ENCODE measurements at regions of chr19 and their contacts with region 1.

Region 1: GRCh38 chr19:50431343-50432220 is 1.1 kb upstream of the MYBPC2 start:
- DNase-seq: peak; percentile 91
- ATAC-seq: peak; percentile 64
- H3K4me3 Mint-ChIP-seq: peak overlapping the region; percentile 89
- H3K27ac Mint-ChIP-seq: peak overlapping the region; percentile 95
- H3K4me1 Mint-ChIP-seq: peaks cover 95% of the 10 kb centered on the region
- H3K27me3 Mint-ChIP-seq: no peaks in the 10 kb centered on the region
- CTCF ChIP-seq: no peak

Region 2: DNA sequence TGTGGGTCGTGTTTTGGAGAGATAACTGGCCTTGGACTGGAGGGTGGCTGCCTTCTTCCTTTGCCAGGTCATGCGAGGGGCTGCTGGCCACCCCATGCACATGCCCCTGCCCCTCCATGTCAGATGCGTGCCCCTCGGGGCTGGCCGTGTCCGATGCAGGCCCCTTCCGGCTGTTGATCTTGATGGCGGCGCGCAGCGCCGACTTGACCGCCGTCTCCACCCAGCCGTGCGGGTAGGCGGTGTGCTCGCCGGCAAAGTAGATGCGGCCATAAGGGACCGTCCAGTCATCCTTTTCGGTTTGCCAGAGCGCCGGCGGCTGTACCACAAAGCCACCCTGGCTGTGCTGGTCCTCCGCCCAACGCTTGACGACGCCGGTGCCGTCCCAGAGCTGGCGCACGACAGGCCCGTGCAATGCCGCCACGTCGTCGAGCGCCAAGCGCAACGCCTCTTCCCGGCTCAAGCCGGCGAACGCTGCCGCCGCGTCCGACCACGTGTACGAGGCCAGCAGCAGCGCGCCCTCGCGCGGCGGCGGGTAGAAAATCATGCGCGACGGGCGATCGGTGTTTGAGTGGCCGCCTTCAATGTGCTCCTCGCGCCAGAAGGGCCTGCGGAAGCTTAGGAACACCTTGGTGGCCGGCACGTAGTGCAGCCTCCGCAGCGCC is 541.8 kb before region 1 on chr19:
- CTCF ChIA-PET with region 1: no interaction called
- POLR2A ChIA-PET with region 1: interaction called, 10 read pairs
- intact Hi-C with region 1: no loop called
- DNase-seq: no peak
- ATAC-seq: peak; percentile 66
- H3K4me3 Mint-ChIP-seq: peak overlapping the region; percentile 82
- H3K27ac Mint-ChIP-seq: peak overlapping the region; percentile 7
- H3K4me1 Mint-ChIP-seq: peaks cover 41% of the 10 kb centered on the region
- H3K27me3 Mint-ChIP-seq: no peaks in the 10 kb centered on the region
- CTCF ChIP-seq: peak; percentile 39

Region 3: GRCh38 chr19:50368649-50369570 is 62.7 kb before region 1 on chr19:
- CTCF ChIA-PET with region 1: interaction called, 3 read pairs
- POLR2A ChIA-PET with region 1: interaction called, 4 read pairs
- intact Hi-C with region 1: loop called (anchors 1 kb)
- DNase-seq: peak; percentile 78
- ATAC-seq: peak; percentile 79
- H3K4me3 Mint-ChIP-seq: peak overlapping the region; percentile 90
- H3K27ac Mint-ChIP-seq: peak overlapping the region; percentile 87
- H3K4me1 Mint-ChIP-seq: peaks cover 39% of the 10 kb centered on the region
- H3K27me3 Mint-ChIP-seq: no peaks in the 10 kb centered on the region
- CTCF ChIP-seq: no peak

Region 4: DNA sequence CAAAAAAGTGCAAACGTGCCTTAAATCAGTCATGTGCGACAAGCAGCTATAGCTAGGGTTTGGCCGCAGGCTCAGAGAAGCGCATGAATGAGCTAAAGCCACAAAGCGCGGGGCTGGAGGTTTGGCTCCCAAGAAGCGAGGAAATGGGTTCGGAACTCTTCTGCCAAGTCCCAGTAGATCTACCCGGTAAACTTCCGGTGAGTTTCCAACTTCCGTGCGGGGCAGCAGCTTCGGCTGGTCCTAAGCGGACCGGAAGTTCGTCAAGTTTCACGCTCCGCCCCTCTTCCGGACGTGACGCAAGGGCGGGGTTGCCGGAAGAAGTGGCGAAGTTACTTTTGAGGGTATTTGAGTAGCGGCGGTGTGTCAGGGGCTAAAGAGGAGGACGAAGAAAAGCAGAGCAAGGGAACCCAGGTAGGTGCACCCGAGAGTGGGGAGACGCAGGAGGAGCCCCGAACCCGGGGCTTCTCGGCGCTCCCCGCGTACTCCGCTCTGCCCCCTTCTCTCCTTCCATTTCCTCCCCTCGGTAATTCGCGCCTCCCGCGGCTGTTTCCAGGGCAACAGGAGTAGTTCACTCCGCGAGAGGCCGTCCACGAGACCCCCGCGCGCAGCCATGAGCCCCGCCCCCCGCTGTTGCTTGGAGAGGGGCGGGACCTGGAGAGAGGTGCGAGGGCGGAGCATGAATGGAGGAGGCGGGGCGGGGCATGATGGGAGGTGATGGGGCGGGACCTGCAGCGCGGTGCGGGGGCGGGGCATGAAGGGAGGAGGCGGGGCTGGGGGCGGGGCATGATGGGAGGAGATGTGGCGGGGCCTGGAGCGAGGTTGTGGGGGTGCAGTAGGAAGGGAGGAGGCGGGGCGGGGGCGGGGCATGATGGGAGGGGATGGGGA is 55.2 kb before region 1 on chr19 and contains the start of gene NR1H2:
- CTCF ChIA-PET with region 1: no interaction called
- POLR2A ChIA-PET with region 1: interaction called, 8 read pairs
- intact Hi-C with region 1: loop called (anchors 1 kb)
- DNase-seq: peak; percentile 90
- ATAC-seq: peak; percentile 88
- H3K4me3 Mint-ChIP-seq: peak within 1 kb of the TSS; percentile 99
- H3K27ac Mint-ChIP-seq: peak within 1 kb of the TSS; percentile 99
- H3K4me1 Mint-ChIP-seq: peaks cover 14% of the 10 kb centered on the region
- H3K27me3 Mint-ChIP-seq: no peaks in the 10 kb centered on the region
- CTCF ChIP-seq: no peak
- total RNA-seq, gene NR1H2: 66.9 and 79.5 TPM in 2 replicates

Region 5: GRCh38 chr19:50383852-50384684 is 47.5 kb before region 1 on chr19 and contains the start of gene POLD1:
- CTCF ChIA-PET with region 1: no interaction called
- POLR2A ChIA-PET with region 1: interaction called, 15 read pairs
- intact Hi-C with region 1: loop called (anchors 1 kb)
- DNase-seq: peak; percentile 97
- ATAC-seq: peak; percentile 94
- H3K4me3 Mint-ChIP-seq: peak within 1 kb of the TSS; percentile 96
- H3K27ac Mint-ChIP-seq: peak within 1 kb of the TSS; percentile 85
- H3K4me1 Mint-ChIP-seq: peaks cover 28% of the 10 kb centered on the region
- H3K27me3 Mint-ChIP-seq: no peaks in the 10 kb centered on the region
- CTCF ChIP-seq: no peak
- total RNA-seq, gene POLD1: 58.8 and 65.5 TPM in 2 replicates

Region 6: DNA sequence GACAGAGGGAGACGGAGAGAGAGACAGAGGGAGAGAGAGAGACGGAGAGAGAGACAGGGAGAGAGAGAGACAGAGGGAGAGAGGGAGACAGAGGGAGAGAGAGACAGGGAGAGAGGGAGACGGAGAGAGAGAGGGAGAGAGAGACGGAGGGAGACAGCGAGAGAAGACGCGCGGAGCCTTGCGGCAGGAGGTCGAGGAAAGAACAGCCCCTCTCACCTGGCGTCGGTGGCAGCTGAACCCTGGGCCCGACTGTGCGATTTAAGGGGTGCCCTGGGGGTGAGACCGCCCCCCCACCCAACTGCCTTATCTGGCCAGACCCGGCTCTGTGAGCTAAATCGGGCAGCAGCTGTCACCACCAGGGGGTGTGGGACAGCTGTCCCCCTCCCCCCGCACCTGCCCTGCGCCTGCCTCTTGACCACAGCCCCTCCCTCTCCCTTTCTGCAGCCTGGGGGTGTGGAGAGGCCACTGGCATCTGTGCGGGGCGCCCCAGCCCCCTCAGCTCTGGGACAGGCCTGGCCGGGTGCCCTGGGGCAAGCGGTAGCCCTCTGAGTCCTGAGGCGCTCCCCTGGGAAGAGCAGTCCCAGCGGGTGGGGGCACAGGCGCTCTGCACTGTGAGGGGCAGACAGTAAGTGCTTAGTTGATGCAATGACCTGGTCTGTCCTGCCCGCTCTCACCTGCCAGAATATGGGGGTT is 68.6 kb after region 1 on chr19:
- CTCF ChIA-PET with region 1: no interaction called
- POLR2A ChIA-PET with region 1: no interaction called
- intact Hi-C with region 1: no loop called
- DNase-seq: no peak
- ATAC-seq: peak; percentile 58
- H3K4me3 Mint-ChIP-seq: no peak overlapping the region
- H3K27ac Mint-ChIP-seq: no peak overlapping the region
- H3K4me1 Mint-ChIP-seq: no peaks in the 10 kb centered on the region
- H3K27me3 Mint-ChIP-seq: no peaks in the 10 kb centered on the region
- CTCF ChIP-seq: no peak

Measured in activated B cell treated with CpG ODN at 0.5 μM for 24 hours (primary cell).